Sigmoid colon (tissue), 7 donors: ENCODE measurements at regions of chr20 and their contacts with region 1.

Region 1: GRCh38 chr20:13105864-13106457 is 97.2 kb downstream of the SPTLC3 start:
- DNase-seq: no peak
- H3K4me3 ChIP-seq: no peak overlapping the region
- H3K27ac ChIP-seq: no peak overlapping the region
- H3K4me1 ChIP-seq: no peaks in the 10 kb centered on the region
- H3K27me3 ChIP-seq: no peaks in the 10 kb centered on the region
- CTCF ChIP-seq: peak in 3 of 4 experiments; percentile 8 to 73 (median 33)
- EP300 ChIP-seq: no peak
- POLR2A ChIP-seq: no peak

Region 2: DNA sequence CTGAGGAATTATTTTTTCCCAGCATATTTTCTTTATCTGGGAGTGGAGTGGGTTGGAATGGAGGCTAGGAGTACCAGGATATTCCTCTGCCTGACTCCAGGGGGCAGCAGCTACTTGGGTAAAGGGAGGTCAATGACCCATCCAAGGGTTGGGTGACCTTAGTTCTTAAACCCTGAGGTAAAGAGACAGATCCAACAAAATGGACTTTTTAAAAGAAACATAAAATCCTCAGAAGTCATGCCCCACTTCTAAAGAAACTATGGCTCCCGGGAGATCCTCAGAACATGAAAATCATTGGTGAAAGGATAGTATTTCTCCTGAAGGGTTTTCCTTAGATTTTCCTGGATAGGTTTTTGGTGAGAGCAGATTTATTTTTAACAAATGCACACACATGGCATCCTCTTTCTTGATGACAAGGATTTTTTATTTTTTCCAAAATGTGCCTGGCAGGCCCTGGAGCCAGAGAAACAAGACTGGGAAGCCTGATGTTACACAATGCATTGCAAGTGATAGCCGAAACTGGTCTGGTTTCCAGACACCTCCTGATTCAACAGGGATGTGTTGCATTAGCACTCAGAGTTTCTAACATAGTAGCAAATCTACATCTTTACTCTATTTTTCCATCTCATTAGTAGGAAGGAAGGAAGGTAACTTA is 1429.2 kb before region 1 on chr20:
- intact Hi-C with region 1: loop called (anchors 10 kb)
- DNase-seq: no peak
- H3K4me3 ChIP-seq: no peak overlapping the region
- H3K27ac ChIP-seq: no peak overlapping the region
- H3K4me1 ChIP-seq: peaks cover 0 to 6% (median 0%) of the 10 kb centered on the region in 4 donors
- H3K27me3 ChIP-seq: no peaks in the 10 kb centered on the region
- CTCF ChIP-seq: peak; percentile 25 to 76 (median 62)
- EP300 ChIP-seq: no peak
- POLR2A ChIP-seq: no peak

Region 3: DNA sequence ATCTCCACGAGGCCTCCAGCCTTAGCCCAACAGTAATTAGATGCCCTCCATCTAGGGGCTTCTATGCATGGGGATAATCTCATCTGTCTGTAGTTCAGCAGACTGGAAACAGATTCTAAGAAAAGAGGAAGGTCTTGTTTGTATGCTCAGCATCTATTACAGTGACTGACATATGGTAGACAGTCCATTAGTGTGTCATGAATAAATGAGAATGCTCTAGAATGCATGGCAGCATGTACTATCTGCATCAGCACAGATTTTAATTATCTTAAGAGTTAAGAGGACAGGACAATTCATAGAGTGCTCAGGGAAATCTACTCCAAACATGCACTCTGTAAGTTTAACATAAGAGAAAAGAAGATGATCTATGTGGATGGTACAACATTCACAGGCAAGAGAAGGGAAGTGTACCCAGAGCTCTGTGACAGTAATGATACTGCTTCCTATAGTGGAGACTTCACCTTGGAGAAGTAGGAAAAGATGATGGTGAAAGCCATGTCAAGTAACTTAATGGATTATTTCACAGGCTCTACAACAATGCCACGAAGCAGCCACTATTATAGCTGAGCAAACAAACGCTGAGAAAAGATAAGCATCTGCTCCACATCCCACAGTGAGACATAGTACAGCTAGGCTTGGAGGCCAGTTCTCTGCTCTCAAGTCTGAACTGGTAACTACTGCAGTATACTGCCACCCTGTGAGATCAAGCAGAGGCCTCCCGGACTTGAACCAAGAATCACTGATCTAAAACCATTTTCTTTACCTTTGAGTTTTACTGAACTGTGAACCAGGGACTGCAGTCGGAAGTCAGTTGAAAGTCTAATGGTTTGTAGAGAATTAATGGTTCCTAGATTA is 406.4 kb before region 1 on chr20:
- intact Hi-C with region 1: no loop called
- DNase-seq: no peak
- H3K4me3 ChIP-seq: no peak overlapping the region
- H3K27ac ChIP-seq: no peak overlapping the region
- H3K4me1 ChIP-seq: no peaks in the 10 kb centered on the region
- H3K27me3 ChIP-seq: no peaks in the 10 kb centered on the region
- CTCF ChIP-seq: no peak
- EP300 ChIP-seq: no peak
- POLR2A ChIP-seq: no peak

Region 4: GRCh38 chr20:12925214-12925755 is 180.7 kb before region 1 on chr20:
- intact Hi-C with region 1: loop called (anchors 2 kb)
- DNase-seq: no peak
- H3K4me3 ChIP-seq: no peak overlapping the region
- H3K27ac ChIP-seq: no peak overlapping the region
- H3K4me1 ChIP-seq: peaks cover 0 to 6% (median 1%) of the 10 kb centered on the region in 4 donors
- H3K27me3 ChIP-seq: peaks cover 0 to 3% (median 0%) of the 10 kb centered on the region in 3 donors
- CTCF ChIP-seq: peak; percentile 56 to 67 (median 62)
- EP300 ChIP-seq: no peak
- POLR2A ChIP-seq: no peak

Region 5: GRCh38 chr20:12970372-12970821 is 135.6 kb before region 1 on chr20:
- intact Hi-C with region 1: loop called (anchors 5 kb)
- DNase-seq: no peak
- H3K4me3 ChIP-seq: no peak overlapping the region
- H3K27ac ChIP-seq: no peak overlapping the region
- H3K4me1 ChIP-seq: no peaks in the 10 kb centered on the region
- H3K27me3 ChIP-seq: no peaks in the 10 kb centered on the region
- CTCF ChIP-seq: peak in 2 of 4 experiments; percentile 41 to 43
- EP300 ChIP-seq: no peak
- POLR2A ChIP-seq: no peak

Region 6: DNA sequence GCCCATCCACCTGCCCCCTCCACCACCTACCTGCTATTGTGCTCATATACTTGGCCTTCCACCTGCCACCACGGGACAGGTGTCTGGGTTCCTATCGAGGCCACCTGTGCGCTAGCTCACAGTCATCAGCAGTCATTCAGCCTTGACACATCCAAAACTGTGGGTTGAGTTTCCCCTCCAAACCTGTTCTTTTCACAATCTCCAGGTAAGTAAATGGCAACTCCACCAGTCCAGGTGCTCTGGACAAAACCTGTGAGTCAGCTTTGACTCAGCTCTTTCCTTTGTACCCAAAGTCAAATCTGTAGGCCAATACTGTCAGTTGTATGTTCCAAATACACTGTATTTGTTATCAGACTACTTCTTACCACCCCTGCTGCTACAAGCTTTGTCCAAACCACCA is 44.6 kb before region 1 on chr20:
- intact Hi-C with region 1: no loop called
- DNase-seq: no peak
- H3K4me3 ChIP-seq: no peak overlapping the region
- H3K27ac ChIP-seq: no peak overlapping the region
- H3K4me1 ChIP-seq: no peaks in the 10 kb centered on the region
- H3K27me3 ChIP-seq: no peaks in the 10 kb centered on the region
- CTCF ChIP-seq: no peak
- EP300 ChIP-seq: no peak
- POLR2A ChIP-seq: no peak

Region 7: GRCh38 chr20:13147071-13147963 is 41.4 kb after region 1 on chr20:
- intact Hi-C with region 1: no loop called
- DNase-seq: no peak
- H3K4me3 ChIP-seq: no peak overlapping the region
- H3K27ac ChIP-seq: no peak overlapping the region
- H3K4me1 ChIP-seq: peaks cover 0 to 12% (median 5%) of the 10 kb centered on the region in 4 donors
- H3K27me3 ChIP-seq: no peaks in the 10 kb centered on the region
- CTCF ChIP-seq: no peak
- EP300 ChIP-seq: no peak
- POLR2A ChIP-seq: no peak

Region 8: GRCh38 chr20:13183005-13183404 is 77.0 kb after region 1 on chr20:
- intact Hi-C with region 1: no loop called
- DNase-seq: no peak
- H3K4me3 ChIP-seq: no peak overlapping the region
- H3K27ac ChIP-seq: no peak overlapping the region
- H3K4me1 ChIP-seq: no peaks in the 10 kb centered on the region
- H3K27me3 ChIP-seq: no peaks in the 10 kb centered on the region
- CTCF ChIP-seq: no peak
- EP300 ChIP-seq: no peak
- POLR2A ChIP-seq: no peak